ENCODE measurements at regions of chr4 and their contacts with region 1.

Region 1: DNA sequence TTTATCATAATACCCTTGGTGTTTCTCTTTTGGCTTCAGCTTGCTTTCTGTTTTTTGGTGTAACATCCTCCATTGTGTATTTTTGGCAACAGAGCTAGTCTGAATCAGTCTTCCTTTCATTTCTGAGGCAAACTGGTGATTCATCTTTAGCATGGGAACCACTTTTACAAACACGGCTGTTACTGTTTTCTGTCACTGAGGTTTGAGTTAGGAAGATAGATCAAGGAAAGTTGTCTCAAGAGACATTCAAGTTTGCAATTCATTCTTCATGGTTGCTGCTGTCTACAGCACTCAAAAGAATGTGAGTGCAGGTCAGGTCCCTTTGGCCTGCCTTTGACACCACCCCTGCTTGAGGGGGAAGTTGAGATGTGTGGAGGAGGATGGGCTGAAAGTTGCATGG is 36.3 kb downstream of the IL21 start:
- DNase-seq: peak; percentile 42
- H3K4me3 Mint-ChIP-seq: peak overlapping the region; percentile 50
- H3K27ac Mint-ChIP-seq: peak overlapping the region; percentile 100
- H3K4me1 Mint-ChIP-seq: peaks cover 65% of the 10 kb centered on the region
- H3K27me3 Mint-ChIP-seq: no peaks in the 10 kb centered on the region

Region 2: DNA sequence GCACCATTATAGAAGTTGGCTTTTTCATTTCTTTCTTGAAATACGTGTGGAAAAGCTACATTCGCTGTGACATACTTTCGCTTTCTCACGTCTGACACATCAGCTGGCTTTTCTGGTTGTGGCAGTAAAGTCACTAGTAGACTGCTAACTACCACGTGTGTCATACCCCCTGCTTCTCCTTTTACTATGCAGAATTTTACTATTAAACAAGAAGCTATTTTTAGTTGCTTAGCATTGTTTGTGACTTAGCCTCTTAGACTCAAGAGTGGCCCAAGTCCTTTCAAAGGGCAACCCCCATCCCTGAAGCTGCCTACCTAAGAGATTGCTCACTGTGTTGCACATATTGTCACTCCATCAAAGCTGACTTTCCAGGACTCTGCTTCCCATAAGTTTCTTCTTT is 125.9 kb before region 1 on chr4:
- CTCF ChIA-PET with region 1: interaction called, 3 read pairs
- intact Hi-C with region 1: loop called (anchors 1 kb)
- DNase-seq: peak; percentile 82
- H3K4me3 Mint-ChIP-seq: peak overlapping the region; percentile 68
- H3K27ac Mint-ChIP-seq: peak overlapping the region; percentile 99
- H3K4me1 Mint-ChIP-seq: peaks cover 43% of the 10 kb centered on the region
- H3K27me3 Mint-ChIP-seq: no peaks in the 10 kb centered on the region

Region 3: GRCh38 chr4:122542411-122543236 is 41.9 kb before region 1 on chr4:
- CTCF ChIA-PET with region 1: interaction called, 39 read pairs
- intact Hi-C with region 1: loop called (anchors 1 kb)
- DNase-seq: no peak
- H3K4me3 Mint-ChIP-seq: peak overlapping the region; percentile 52
- H3K27ac Mint-ChIP-seq: peak overlapping the region; percentile 100
- H3K4me1 Mint-ChIP-seq: peaks cover 94% of the 10 kb centered on the region
- H3K27me3 Mint-ChIP-seq: no peaks in the 10 kb centered on the region

Region 4: DNA sequence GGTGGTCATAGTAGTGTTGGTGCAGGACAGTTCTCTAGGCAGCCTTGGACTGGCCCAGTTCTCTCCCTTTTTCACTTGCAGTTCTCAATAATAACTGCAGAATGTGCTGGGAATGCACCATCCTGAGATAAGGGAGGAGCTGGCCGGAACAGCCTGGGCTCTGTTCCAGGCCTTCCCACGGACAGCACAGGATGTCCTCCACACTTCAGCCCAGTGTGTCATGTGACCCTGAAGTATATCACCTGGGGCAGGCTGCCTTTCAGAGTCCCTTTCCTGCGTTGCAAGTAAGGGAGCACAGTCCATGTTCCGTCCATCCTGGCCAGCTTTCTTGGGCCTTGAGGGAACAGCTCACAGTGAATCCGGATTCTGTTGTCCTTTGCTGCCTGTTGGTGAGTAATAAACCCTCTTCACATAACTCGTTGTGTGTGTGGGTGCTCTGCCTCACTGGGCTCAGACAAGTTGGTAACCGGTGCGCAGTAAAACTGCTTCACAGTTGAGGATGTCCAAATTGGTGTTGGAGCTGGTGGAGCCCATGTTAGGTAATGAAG is 115.7 kb after region 1 on chr4:
- CTCF ChIA-PET with region 1: no interaction called
- intact Hi-C with region 1: loop called (anchors 2 kb)
- DNase-seq: no peak
- H3K4me3 Mint-ChIP-seq: peak overlapping the region; percentile 69
- H3K27ac Mint-ChIP-seq: peak overlapping the region; percentile 99
- H3K4me1 Mint-ChIP-seq: peaks cover 56% of the 10 kb centered on the region
- H3K27me3 Mint-ChIP-seq: peaks cover 4% of the 10 kb centered on the region

Region 5: DNA sequence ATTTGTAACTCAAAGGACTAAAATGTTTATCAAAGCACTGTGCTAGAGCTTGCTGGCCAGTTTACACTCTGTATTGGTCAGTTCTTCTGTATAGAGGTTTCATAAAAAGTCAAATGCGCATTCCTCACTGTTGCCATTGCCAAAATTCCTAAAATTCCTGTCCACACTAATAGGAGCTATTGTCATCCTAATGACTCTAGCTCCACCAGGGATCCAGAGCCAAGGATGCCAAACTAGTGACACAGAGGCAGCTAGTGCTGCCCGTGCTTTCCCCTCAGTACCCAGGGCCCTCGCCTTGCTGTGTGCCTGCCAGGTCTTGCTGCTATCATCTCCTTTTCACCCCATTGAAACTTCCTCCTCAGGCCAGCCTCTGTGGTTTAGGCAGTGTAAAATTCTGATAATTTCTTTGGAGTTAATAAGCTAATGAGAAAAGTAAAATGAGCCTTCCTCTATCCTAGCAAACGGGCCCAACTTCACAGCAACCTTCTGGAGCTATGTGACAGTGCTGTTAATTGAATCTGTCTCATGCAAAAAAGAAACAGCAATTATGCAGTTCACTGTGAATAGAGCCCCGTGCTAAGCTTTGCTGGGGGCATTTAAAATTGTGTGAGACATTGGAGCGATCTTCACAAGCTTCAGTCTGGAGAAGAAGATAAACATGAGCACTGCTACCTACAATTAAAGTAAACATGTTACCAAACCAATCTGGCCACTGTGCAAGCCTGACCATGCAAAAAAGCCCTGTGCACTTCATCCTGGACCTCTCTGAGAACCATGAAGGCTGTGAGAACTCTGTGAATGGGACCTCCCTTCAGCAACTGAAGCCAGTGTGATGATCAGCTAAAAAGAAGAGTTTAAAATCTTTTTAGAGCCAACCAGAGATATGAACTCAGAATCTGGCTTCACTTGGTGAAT is 199.0 kb after region 1 on chr4:
- CTCF ChIA-PET with region 1: no interaction called
- intact Hi-C with region 1: loop called (anchors 1 kb)
- DNase-seq: no peak
- H3K4me3 Mint-ChIP-seq: no peak overlapping the region
- H3K27ac Mint-ChIP-seq: no peak overlapping the region
- H3K4me1 Mint-ChIP-seq: peaks cover 19% of the 10 kb centered on the region
- H3K27me3 Mint-ChIP-seq: peaks cover 16% of the 10 kb centered on the region

Measured in activated naive CD4-positive, alpha-beta T cell treated with anti-CD3 and anti-CD28 coated beads for 36 hours (primary cell).